BJ (cell line): ENCODE measurements at regions of chr17 and their contacts with region 1.

Region 1: GRCh38 chr17:54992797-54993639 is 24.5 kb downstream of the STXBP4 start:
- DNase-seq: no peak
- H3K4me3 ChIP-seq: no peak overlapping the region
- H3K27me3 ChIP-seq: no peaks in the 10 kb centered on the region
- CTCF ChIP-seq: peak; percentile 51

Region 2: DNA sequence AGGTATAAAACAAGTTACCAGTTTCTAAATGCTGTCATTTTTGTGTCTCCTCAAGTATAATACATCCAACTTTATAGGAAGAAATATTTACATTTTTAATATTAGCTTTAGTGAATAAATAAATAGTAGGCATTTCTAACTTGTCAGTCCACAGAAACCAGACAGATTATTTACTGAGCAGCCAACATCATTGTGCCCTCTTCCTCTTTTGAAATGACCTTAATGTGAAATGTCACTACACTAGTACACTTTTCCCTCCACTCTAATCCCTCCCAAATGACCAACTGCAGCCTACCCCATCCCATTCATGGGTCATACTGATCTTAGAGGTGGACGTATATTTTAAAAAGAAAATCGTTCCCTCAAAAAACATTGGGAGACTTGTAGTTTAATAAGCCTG is 15.3 kb before region 1 on chr17:
- CTCF ChIA-PET with region 1: interaction called, 10 read pairs
- POLR2A ChIA-PET with region 1: no interaction called
- DNase-seq: no peak
- H3K4me3 ChIP-seq: no peak overlapping the region
- H3K27me3 ChIP-seq: no peaks in the 10 kb centered on the region
- CTCF ChIP-seq: no peak

Region 3: DNA sequence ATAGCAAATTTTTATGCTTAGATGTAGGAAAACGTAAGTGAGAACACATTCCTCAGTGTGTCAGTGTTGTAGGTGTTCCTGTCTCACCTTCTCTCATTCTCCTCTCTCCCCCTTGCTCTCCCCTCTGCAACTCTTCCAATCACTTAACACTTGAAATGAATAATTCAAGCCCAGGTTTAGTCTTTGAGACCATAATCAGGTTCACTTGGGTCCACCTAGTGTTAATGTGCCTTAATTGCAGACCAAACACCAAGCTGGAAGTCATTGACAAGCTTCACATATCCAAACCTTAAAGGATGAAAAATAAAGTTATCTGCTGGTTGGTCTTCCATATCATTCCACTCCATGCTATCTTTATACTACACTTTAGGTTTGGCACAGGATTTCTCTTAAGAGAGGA is 12.5 kb after region 1 on chr17:
- CTCF ChIA-PET with region 1: interaction called, 24 read pairs
- POLR2A ChIA-PET with region 1: no interaction called
- DNase-seq: no peak
- H3K4me3 ChIP-seq: no peak overlapping the region
- H3K27me3 ChIP-seq: no peaks in the 10 kb centered on the region
- CTCF ChIP-seq: peak; percentile 51

Region 4: DNA sequence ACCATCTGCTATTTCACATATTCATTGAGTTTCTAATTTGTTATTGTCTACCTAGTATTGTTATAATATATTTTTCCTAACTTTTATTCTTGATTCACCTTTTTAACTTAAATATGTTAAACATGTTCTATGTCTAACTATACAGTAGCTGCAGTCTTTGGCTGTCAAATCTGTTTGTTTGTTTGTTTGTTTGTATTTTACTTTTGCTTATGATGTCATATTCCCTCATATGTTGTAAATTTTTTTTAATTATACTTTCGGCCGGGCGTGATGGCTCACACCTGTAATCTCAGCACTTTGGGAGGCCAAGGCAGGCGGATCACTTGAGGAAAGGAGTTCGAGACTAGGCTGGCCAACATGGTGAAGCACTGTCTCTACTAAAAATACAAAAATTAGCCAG is 27.3 kb after region 1 on chr17:
- CTCF ChIA-PET with region 1: no interaction called
- POLR2A ChIA-PET with region 1: no interaction called
- DNase-seq: no peak
- H3K4me3 ChIP-seq: no peak overlapping the region
- H3K27me3 ChIP-seq: no peaks in the 10 kb centered on the region
- CTCF ChIP-seq: no peak

Region 5: GRCh38 chr17:55295411-55296170 is 302.6 kb after region 1 on chr17:
- CTCF ChIA-PET with region 1: interaction called, 36 read pairs
- POLR2A ChIA-PET with region 1: no interaction called
- DNase-seq: no peak
- H3K4me3 ChIP-seq: no peak overlapping the region
- H3K27me3 ChIP-seq: peaks cover 3% of the 10 kb centered on the region
- CTCF ChIP-seq: peak; percentile 87

Region 6: GRCh38 chr17:55348749-55349354 is 355.8 kb after region 1 on chr17:
- CTCF ChIA-PET with region 1: interaction called, 64 read pairs
- POLR2A ChIA-PET with region 1: interaction called, 10 read pairs
- DNase-seq: no peak
- H3K4me3 ChIP-seq: no peak overlapping the region
- H3K27me3 ChIP-seq: no peaks in the 10 kb centered on the region
- CTCF ChIP-seq: peak; percentile 91

Region 7: GRCh38 chr17:55356434-55357328 is 363.7 kb after region 1 on chr17:
- CTCF ChIA-PET with region 1: interaction called, 17 read pairs
- POLR2A ChIA-PET with region 1: no interaction called
- DNase-seq: no peak
- H3K4me3 ChIP-seq: no peak overlapping the region
- H3K27me3 ChIP-seq: no peaks in the 10 kb centered on the region
- CTCF ChIP-seq: peak; percentile 86

Region 8: GRCh38 chr17:55513885-55514591 is 521.0 kb after region 1 on chr17:
- CTCF ChIA-PET with region 1: interaction called, 11 read pairs
- POLR2A ChIA-PET with region 1: no interaction called
- DNase-seq: no peak
- H3K4me3 ChIP-seq: no peak overlapping the region
- H3K27me3 ChIP-seq: no peaks in the 10 kb centered on the region
- CTCF ChIP-seq: peak; percentile 94